IMR-90 (cell line): ENCODE measurements at regions of chr3 and their contacts with region 1.

Region 1: GRCh38 chr3:161423911-161424522 is 52.7 kb upstream of the SPTSSB start:
- DNase-seq: peak; percentile 42
- ATAC-seq: peak; percentile 52
- H3K4me3 ChIP-seq: no peak overlapping the region
- H3K27ac ChIP-seq: no peak overlapping the region
- H3K4me1 ChIP-seq: peaks cover 7% of the 10 kb centered on the region
- H3K27me3 ChIP-seq: no peaks in the 10 kb centered on the region
- CTCF ChIP-seq: peak; percentile 81
- POLR2A ChIP-seq: no peak
- RAD21 ChIP-seq: peak; percentile 82

Region 2: DNA sequence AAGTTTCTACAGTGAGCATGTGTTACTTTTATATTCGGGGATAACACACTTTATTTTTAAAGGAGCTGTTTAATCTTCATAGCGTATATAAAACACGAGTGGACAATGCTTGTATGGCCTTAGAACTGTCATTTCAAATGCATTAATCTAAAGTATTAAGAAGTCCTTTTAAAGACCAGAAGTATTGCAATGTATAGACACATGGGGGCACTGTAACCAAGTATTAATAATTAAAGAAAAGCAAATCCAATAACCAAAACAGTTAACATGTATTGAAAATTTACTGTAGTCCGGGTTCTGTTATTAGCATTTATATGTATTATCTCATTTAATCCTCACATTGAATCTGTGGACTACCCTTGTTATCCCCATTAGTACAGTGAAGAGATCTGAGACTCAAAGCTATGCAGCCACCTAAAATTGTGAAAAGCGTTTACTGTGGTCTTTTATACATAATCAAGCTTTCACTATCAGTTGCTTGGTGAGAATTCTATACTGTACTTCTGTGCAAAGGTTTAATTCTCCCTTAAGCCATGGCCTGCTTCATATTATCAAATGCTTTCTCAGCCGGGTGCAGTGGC is 737.0 kb before region 1 on chr3:
- CTCF ChIA-PET with region 1: interaction called, 4 read pairs
- POLR2A ChIA-PET with region 1: no interaction called
- dilution Hi-C with region 1: no loop called
- in situ Hi-C with region 1: no loop called
- intact Hi-C with region 1: loop called (anchors 5 kb)
- DNase-seq: peak; percentile 24
- ATAC-seq: peak; percentile 62
- H3K4me3 ChIP-seq: no peak overlapping the region
- H3K27ac ChIP-seq: no peak overlapping the region
- H3K4me1 ChIP-seq: no peaks in the 10 kb centered on the region
- H3K27me3 ChIP-seq: no peaks in the 10 kb centered on the region
- CTCF ChIP-seq: peak; percentile 45
- POLR2A ChIP-seq: no peak
- RAD21 ChIP-seq: peak; percentile 40

Region 3: DNA sequence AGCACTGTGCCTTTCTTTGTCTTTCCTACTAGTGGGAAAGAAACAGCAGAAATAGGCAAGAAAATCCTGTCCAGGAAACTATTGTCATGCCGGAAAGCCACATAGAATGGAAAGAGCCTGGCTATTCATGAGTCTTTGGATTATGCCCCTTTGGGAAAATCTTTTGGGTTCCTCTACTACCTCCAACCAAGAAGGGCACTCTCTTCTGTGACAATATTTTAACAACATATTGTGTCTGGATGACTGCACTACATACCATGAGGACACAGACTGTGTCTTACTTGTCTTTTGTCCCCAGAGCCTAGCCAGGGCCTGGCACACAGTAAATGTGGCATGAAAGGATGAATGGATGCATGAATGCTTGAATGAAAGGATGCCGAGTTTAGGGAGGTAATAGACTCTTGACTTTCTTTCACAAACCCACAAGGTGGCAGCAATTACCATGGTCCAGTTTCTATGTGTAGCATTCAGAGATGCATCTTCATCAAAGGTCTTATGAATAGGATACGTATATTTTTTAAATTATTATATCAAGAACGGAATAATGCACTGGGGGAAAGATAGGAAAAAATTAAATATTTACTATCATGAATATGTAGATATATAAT is 716.7 kb before region 1 on chr3:
- CTCF ChIA-PET with region 1: no interaction called
- POLR2A ChIA-PET with region 1: no interaction called
- dilution Hi-C with region 1: no loop called
- in situ Hi-C with region 1: loop called (anchors 25 kb)
- intact Hi-C with region 1: loop called (anchors 5 kb)
- DNase-seq: peak; percentile 50
- ATAC-seq: peak; percentile 89
- H3K4me3 ChIP-seq: no peak overlapping the region
- H3K27ac ChIP-seq: no peak overlapping the region
- H3K4me1 ChIP-seq: peaks cover 3% of the 10 kb centered on the region; the same call in 1 of the 2 replicates
- H3K27me3 ChIP-seq: peaks cover 6% of the 10 kb centered on the region
- CTCF ChIP-seq: peak; percentile 51
- POLR2A ChIP-seq: no peak
- RAD21 ChIP-seq: peak; percentile 60

Region 4: DNA sequence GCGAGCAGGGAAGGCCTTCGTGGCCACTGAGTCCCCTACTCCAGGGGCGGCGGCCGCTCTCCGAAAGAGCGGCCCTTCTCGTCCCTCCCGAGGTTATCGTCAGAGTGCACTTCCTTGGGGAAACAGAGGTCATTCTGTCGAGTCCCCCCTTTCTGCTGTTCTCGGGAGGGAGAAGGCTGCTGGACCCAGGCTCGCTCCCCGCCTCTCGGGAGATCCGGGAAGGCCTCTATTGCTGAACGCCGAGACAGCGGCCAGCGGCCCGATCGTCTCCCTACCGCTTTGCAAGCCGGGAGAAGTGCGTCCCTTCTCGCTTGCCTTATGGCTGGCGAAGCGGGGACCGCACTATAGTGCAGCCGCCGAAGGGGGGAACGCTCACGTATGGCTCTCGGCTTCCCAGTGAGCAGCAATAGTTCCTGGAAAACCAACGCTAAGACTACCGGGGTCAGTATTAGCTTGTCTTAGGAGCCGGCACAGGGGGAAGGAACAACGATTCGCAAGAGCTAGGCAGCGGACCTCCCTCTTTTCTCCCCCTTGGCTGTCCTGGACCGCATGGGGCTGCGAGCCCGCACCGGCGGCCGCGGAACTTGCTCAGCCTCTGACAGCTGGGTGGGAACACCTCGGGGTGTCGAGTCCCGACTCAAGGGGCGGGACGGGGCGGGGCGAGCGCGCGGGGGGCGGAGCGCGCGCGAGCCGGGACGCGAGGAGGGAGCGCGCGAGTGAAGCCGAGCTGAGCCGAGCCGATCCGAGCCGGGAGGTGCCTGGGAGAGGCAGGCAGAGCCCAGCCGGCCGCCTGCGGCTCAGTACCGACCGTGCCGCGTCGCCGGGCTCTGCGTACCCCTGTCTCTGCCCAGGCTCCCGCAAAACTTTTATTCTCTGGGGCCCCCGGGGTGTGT is 668.9 kb before region 1 on chr3:
- CTCF ChIA-PET with region 1: no interaction called
- POLR2A ChIA-PET with region 1: no interaction called
- dilution Hi-C with region 1: no loop called
- in situ Hi-C with region 1: no loop called
- intact Hi-C with region 1: loop called (anchors 2 kb)
- DNase-seq: peak; percentile 88
- ATAC-seq: peak; percentile 93
- H3K4me3 ChIP-seq: peak overlapping the region; percentile 61
- H3K27ac ChIP-seq: peak overlapping the region; percentile 48
- H3K4me1 ChIP-seq: no peaks in the 10 kb centered on the region
- H3K27me3 ChIP-seq: peaks cover 12% of the 10 kb centered on the region
- CTCF ChIP-seq: no peak
- POLR2A ChIP-seq: peak; percentile 49; the same call in 1 of the 2 replicates
- RAD21 ChIP-seq: no peak

Region 5: DNA sequence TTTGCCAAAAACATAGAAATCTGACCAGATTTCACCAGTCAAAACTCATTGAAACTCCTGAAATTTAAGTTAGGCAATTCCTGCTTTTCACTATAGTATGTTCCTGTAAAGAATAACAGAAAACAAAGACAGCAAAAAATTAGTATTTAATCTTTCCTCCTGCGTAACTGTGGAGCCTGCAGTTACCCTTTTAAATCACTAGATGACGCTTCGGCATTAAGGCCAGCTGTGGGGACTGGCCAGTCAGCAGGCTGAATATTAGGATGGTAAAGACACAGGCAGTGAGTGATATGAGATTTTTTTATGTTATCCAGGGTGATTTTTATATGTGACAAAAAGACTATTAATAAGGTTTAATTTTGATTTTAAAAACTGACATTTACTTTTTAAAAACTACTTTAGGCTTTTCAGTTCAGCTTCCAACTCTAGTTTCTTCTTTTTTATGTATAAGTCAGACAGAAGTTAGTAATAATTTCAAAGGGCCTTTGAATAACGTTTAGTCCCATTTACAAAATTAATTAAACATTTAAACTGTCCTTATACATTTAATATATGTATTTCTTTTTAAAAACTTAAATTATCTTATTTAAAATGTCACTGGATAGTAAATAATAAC is 502.9 kb before region 1 on chr3:
- CTCF ChIA-PET with region 1: no interaction called
- POLR2A ChIA-PET with region 1: no interaction called
- dilution Hi-C with region 1: no loop called
- in situ Hi-C with region 1: loop called (anchors 25 kb)
- intact Hi-C with region 1: loop called (anchors 1 kb)
- DNase-seq: peak; percentile 39
- ATAC-seq: peak; percentile 98
- H3K4me3 ChIP-seq: no peak overlapping the region
- H3K27ac ChIP-seq: no peak overlapping the region
- H3K4me1 ChIP-seq: no peaks in the 10 kb centered on the region
- H3K27me3 ChIP-seq: no peaks in the 10 kb centered on the region; the same call in none of the 2 replicates
- CTCF ChIP-seq: peak; percentile 83
- POLR2A ChIP-seq: no peak
- RAD21 ChIP-seq: peak; percentile 74

Region 6: DNA sequence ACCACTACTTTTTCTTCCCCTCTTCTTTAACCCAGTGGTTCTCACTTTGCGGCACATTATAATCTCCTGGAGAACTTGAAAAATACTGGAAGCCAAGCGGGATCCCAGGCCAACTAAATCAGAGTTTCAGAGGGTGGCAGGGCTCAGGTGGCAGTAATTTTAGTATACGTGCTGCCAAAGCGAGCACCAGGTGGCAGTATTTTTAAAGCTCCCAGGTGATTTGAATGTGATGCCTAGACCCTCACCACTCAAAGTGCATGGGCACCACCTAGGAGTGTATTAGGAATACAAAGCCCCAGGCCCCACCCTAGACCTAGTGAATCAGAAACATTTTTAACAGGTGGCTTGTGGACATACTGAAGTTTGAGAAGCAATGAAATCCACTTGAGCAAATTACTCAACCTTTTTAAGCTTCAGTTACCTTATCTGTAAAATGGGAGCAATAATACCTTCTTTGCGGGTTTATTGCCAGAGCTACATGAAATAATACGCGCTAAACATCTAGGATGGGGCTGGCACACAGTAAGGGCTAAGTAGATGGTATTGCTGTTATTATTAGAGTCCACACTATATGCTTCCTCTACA is 327.2 kb before region 1 on chr3:
- CTCF ChIA-PET with region 1: no interaction called
- POLR2A ChIA-PET with region 1: no interaction called
- dilution Hi-C with region 1: no loop called
- in situ Hi-C with region 1: no loop called
- intact Hi-C with region 1: loop called (anchors 1 kb)
- DNase-seq: peak; percentile 4
- ATAC-seq: no peak
- H3K4me3 ChIP-seq: no peak overlapping the region
- H3K27ac ChIP-seq: no peak overlapping the region
- H3K4me1 ChIP-seq: no peaks in the 10 kb centered on the region
- H3K27me3 ChIP-seq: no peaks in the 10 kb centered on the region
- CTCF ChIP-seq: peak; percentile 14; the same call in 1 of the 2 replicates
- POLR2A ChIP-seq: no peak
- RAD21 ChIP-seq: no peak

Region 7: GRCh38 chr3:161274719-161275298 is 149.2 kb before region 1 on chr3:
- CTCF ChIA-PET with region 1: interaction called, 16 read pairs
- POLR2A ChIA-PET with region 1: no interaction called
- dilution Hi-C with region 1: no loop called
- in situ Hi-C with region 1: loop called (anchors 5 kb)
- intact Hi-C with region 1: loop called (anchors 1 kb)
- DNase-seq: peak; percentile 63
- ATAC-seq: peak; percentile 67
- H3K4me3 ChIP-seq: no peak overlapping the region
- H3K27ac ChIP-seq: no peak overlapping the region
- H3K4me1 ChIP-seq: peaks cover 2% of the 10 kb centered on the region; the same call in 1 of the 2 replicates
- H3K27me3 ChIP-seq: no peaks in the 10 kb centered on the region
- CTCF ChIP-seq: peak; percentile 75
- POLR2A ChIP-seq: no peak
- RAD21 ChIP-seq: peak; percentile 66

Region 8: DNA sequence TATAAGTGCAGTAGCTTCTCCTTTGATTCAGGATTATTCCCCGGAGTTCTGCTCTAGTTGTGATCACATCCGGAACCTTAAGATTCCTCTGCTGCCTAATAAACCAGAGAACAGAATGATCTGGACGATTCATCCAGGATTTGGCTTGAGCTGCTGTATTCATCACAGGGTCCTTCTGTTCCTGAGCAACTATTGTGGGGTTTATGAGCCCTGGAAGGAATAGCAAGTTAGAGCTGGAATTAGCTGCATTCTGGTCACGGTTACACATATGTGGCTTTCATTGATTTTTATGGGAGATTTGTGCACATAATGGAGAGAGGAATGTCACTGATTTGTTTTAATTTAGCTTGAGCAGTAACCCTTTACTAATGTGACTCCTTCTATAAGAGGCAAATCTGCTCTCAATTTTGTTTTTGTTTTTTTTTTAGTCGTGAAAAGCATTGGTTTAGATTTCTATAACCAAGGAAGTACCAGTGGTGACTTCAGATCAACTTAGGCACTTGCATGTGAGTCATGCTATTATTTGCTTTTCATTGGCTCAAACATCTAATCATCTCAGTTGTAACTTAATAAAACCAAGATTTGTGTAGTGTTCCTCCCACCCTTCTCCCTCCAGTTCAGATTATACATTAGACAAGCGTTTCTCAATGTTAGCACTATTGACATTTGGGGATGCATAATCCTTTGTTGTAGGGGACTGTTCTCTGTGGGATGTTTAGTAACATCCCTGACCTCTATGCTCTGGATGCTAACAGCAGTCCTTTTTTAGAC is 221.1 kb after region 1 on chr3:
- CTCF ChIA-PET with region 1: no interaction called
- POLR2A ChIA-PET with region 1: no interaction called
- dilution Hi-C with region 1: no loop called
- in situ Hi-C with region 1: no loop called
- intact Hi-C with region 1: no loop called
- DNase-seq: no peak
- ATAC-seq: no peak
- H3K4me3 ChIP-seq: no peak overlapping the region
- H3K27ac ChIP-seq: no peak overlapping the region
- H3K4me1 ChIP-seq: no peaks in the 10 kb centered on the region
- H3K27me3 ChIP-seq: no peaks in the 10 kb centered on the region
- CTCF ChIP-seq: no peak
- POLR2A ChIP-seq: no peak
- RAD21 ChIP-seq: no peak